ENCODE measurements at regions of chr15 and their contacts with region 1.

Region 1: GRCh38 chr15:78909791-78910228 is 35.0 kb downstream of the CTSH start:
- DNase-seq: no peak
- ATAC-seq: peak; percentile 44 to 57
- H3K4me3 ChIP-seq: no peak overlapping the region
- H3K27ac ChIP-seq: no peak overlapping the region
- H3K4me1 ChIP-seq: peaks cover 6% of the 10 kb centered on the region
- H3K27me3 ChIP-seq: no peaks in the 10 kb centered on the region

Region 2: DNA sequence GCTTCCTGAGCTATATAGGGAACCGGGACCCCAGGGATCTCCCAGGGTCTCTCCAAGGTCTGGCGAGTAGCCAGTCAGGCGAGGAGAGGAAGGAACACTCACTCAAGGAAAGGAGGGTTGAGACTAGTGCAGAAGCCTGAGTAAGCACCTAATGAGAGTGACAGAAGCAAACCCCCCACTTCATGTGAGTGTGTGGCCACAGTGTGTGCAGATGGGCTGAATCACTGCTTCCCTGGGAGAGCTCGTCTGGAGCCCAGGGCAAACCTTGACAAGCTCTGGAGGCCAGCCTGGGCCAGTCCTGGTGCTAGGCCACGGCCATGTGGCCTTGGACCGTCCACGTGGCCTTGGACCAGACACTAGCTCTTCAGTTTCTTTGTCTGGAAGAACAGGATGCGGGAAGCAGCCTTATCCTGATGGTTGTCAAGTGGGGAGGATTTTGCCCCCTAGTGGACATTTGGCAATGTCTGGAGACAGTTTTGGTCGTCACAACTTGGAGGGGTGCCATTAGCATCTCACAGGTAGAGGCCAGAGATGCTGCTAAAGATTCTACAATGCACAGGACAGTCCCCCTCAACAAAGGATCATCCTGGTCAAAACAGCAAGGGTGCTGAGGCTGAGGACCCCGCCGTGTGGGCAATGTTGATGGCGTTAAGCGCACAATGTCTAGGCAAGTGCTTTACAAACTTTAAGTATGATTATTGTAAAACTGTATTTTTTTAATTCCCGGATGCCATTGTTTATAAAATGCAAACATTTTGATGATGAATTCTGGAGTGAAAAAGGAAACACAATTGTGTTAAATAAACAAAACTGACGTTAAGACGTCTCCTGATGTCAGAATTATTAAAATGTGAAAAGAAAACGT is 69.9 kb after region 1 on chr15:
- intact Hi-C with region 1: loop called in 2 of 4 experiments (anchors 5 kb)
- DNase-seq: peak in 2 of 3 donors; percentile 38 to 68
- ATAC-seq: peak; percentile 53 to 70
- H3K4me3 ChIP-seq: no peak overlapping the region
- H3K27ac ChIP-seq: no peak overlapping the region
- H3K4me1 ChIP-seq: no peaks in the 10 kb centered on the region
- H3K27me3 ChIP-seq: no peaks in the 10 kb centered on the region

Region 3: GRCh38 chr15:79071901-79072300 is 162.1 kb after region 1 on chr15:
- intact Hi-C with region 1: no loop called
- DNase-seq: peak; percentile 71 to 80 (median 78)
- ATAC-seq: peak; percentile 83 to 93
- H3K4me3 ChIP-seq: no peak overlapping the region
- H3K27ac ChIP-seq: no peak overlapping the region
- H3K4me1 ChIP-seq: no peaks in the 10 kb centered on the region
- H3K27me3 ChIP-seq: no peaks in the 10 kb centered on the region

Region 4: GRCh38 chr15:79184465-79184892 is 274.7 kb after region 1 on chr15:
- intact Hi-C with region 1: loop called in 1 of 4 experiments (anchors 10 kb)
- DNase-seq: peak; percentile 72 to 91 (median 81)
- ATAC-seq: peak in 1 of 2 donors; percentile 61
- H3K4me3 ChIP-seq: no peak overlapping the region
- H3K27ac ChIP-seq: no peak overlapping the region
- H3K4me1 ChIP-seq: no peaks in the 10 kb centered on the region
- H3K27me3 ChIP-seq: no peaks in the 10 kb centered on the region